ENCODE measurements at regions of chr15 and their contacts with region 1.

Region 1: DNA sequence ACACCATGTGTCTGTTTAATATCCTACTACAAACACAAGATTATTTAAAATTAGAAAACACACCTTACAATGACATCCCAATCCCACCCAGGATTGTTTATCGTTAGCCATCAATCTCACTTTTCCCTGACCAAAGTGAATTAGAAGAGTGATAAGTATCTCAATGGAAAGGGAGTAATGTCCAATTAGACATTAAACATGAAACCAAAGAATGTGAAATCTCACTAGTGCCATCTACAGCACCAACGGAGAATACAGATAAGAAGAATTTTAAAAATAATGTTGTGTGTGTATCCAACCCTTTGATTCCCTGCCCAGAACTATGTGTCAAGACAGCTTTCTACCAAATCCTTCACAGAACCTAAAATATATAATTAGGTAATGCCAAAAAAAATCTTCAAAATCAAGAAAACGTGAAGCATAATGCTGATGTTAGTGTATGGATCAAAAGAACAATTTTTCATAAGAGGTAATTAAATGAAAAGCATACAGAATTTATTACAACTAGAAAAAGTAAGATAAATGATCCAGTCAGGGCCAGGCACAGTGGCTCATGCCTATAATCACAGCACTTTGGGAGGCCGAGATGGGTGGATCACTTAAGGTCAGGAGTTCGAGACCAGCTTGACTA is 64.2 kb downstream of the SCAPER start:
- DNase-seq: peak in 2 of 14 experiments; percentile 11 to 21
- ATAC-seq: no peak
- H3K4me3 ChIP-seq: no peak overlapping the region
- H3K4me3 Mint-ChIP-seq: no peak overlapping the region
- H3K27ac ChIP-seq: no peak overlapping the region
- H3K27ac Mint-ChIP-seq: no peak overlapping the region
- H3K4me1 ChIP-seq: no peaks in the 10 kb centered on the region
- H3K4me1 Mint-ChIP-seq: peaks cover 33% of the 10 kb centered on the region
- H3K27me3 ChIP-seq: no peaks in the 10 kb centered on the region
- H3K27me3 Mint-ChIP-seq: no peaks in the 10 kb centered on the region
- CTCF ChIP-seq: peak; percentile 56

Region 2: GRCh38 chr15:76190834-76191538 is 650.0 kb before region 1 on chr15:
- CTCF ChIA-PET with region 1: no interaction called
- POLR2A ChIA-PET with region 1: no interaction called
- intact Hi-C with region 1: loop called in 1 of 2 experiments (anchors 2 kb)
- DNase-seq: peak; percentile 29 to 74 (median 56)
- ATAC-seq: peak; percentile 84
- H3K4me3 ChIP-seq: peak overlapping the region; percentile 7
- H3K4me3 Mint-ChIP-seq: no peak overlapping the region
- H3K27ac ChIP-seq: no peak overlapping the region
- H3K27ac Mint-ChIP-seq: no peak overlapping the region
- H3K4me1 ChIP-seq: peaks cover 13% of the 10 kb centered on the region
- H3K4me1 Mint-ChIP-seq: peaks cover 7% of the 10 kb centered on the region
- H3K27me3 ChIP-seq: peaks cover 28% of the 10 kb centered on the region in 2 experiments
- H3K27me3 Mint-ChIP-seq: peaks cover 45% of the 10 kb centered on the region
- CTCF ChIP-seq: peak; percentile 91

Region 3: GRCh38 chr15:76823890-76824289 is 17.1 kb before region 1 on chr15:
- CTCF ChIA-PET with region 1: no interaction called
- POLR2A ChIA-PET with region 1: no interaction called
- intact Hi-C with region 1: no loop called
- DNase-seq: no peak
- ATAC-seq: no peak
- H3K4me3 ChIP-seq: no peak overlapping the region
- H3K4me3 Mint-ChIP-seq: no peak overlapping the region
- H3K27ac ChIP-seq: no peak overlapping the region
- H3K27ac Mint-ChIP-seq: no peak overlapping the region
- H3K4me1 ChIP-seq: no peaks in the 10 kb centered on the region
- H3K4me1 Mint-ChIP-seq: peaks cover 27% of the 10 kb centered on the region
- H3K27me3 ChIP-seq: no peaks in the 10 kb centered on the region
- H3K27me3 Mint-ChIP-seq: no peaks in the 10 kb centered on the region
- CTCF ChIP-seq: no peak

Region 4: GRCh38 chr15:77607111-77607893 is 766.4 kb after region 1 on chr15:
- CTCF ChIA-PET with region 1: no interaction called
- POLR2A ChIA-PET with region 1: no interaction called
- intact Hi-C with region 1: no loop called
- DNase-seq: no peak
- ATAC-seq: no peak
- H3K4me3 ChIP-seq: no peak overlapping the region
- H3K4me3 Mint-ChIP-seq: no peak overlapping the region
- H3K27ac ChIP-seq: no peak overlapping the region
- H3K27ac Mint-ChIP-seq: no peak overlapping the region
- H3K4me1 ChIP-seq: no peaks in the 10 kb centered on the region
- H3K4me1 Mint-ChIP-seq: peaks cover 5% of the 10 kb centered on the region
- H3K27me3 ChIP-seq: no peaks in the 10 kb centered on the region
- H3K27me3 Mint-ChIP-seq: peaks cover 9% of the 10 kb centered on the region
- CTCF ChIP-seq: no peak

Measured in CD4-positive, alpha-beta T cell (primary cell).